Posterior vena cava (tissue), 2 donors: ENCODE measurements at regions of chr15 and their contacts with region 1.

Region 1: GRCh38 chr15:67839929-67840748 is at the start of gene RNU6-1:
- DNase-seq: peak; percentile 99
- total RNA-seq, gene RNU6-1: not detected

Region 2: DNA sequence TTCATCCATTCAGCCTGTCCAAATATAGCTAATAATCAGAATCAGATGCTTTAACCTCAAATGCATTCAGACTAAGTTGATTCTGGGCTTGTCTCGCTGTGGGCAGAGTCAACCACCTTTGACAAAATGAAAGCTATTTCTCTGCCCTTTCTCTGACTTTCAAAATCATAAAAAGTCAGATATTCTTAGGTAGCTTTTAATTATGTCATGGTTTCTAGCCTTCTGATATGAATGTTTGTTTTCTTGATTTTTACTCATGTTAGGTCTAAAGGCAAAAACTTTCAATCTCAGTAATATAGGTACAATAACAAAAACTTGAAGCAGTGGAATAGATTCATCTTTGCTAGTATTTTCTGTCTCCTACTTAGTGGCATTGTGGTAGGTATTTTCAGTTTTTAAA is 344.6 kb before region 1 on chr15:
- intact Hi-C with region 1: loop called in 1 of 2 experiments (anchors 10 kb)
- DNase-seq: no peak